Cardiac septum (tissue), 1 donor: ENCODE measurements at regions of chr9 and their contacts with region 1.

Region 1: GRCh38 chr9:6757456-6758247 is at the start of gene KDM4C:
- DNase-seq: peak; percentile 96
- total RNA-seq, gene KDM4C: 16.8 TPM

Region 2: GRCh38 chr9:6703898-6704639 is 53.6 kb before region 1 on chr9:
- intact Hi-C with region 1: loop called (anchors 2 kb)
- DNase-seq: peak; percentile 95

Region 3: DNA sequence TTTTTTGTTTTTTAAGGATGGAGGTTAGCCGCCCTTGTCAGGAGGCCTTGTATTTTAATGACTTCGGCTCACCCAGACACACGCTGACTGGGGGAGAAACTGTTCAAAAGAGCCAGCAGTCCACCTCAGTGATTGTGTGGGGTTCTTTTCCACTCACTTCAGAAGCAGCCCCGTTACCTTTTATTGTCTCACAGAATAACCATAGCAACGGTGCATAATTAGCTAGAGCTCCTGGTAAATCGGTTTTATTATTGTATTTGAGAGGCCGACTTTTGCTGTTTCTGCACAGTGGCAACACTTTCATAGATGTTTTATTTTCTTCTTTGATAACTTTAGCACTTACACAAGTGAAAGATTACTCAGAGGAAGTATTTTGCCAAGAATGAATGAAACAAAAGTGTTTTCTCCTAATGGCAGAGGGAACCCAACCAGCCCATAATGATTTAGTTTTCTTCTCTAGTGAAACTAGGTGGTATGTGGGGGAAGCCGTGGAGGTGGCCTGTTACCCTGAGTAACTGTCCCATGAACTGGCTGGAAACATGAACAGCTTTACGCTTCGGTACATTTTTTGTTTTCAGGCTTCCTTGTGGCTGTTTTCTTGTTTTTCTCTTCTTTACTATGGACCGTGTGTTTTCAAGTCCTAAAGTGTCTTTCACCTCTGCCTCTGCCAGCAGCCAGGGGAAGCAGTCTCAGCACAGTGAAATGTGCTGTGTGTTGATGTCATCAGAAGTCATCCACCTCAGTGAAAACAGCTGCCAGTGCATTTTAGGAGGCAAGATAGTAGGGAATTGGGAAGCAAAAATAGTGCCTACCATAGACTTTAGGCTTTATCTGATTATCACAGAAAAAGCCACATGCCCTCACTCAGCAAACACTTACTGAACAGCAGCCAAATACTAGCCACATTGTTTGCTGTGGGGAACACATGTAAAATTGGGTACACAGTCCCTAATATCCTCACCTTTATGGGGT is 414.8 kb after region 1 on chr9:
- intact Hi-C with region 1: no loop called
- DNase-seq: no peak